SK-N-SH (cell line): ENCODE measurements at regions of chrX and their contacts with region 1.

Region 1: GRCh38 chrX:69615779-69616456 is at the start of gene EDA:
- DNase-seq: peak; percentile 88
- H3K4me3 ChIP-seq: peak within 1 kb of the TSS; percentile 38 to 49
- H3K27ac ChIP-seq: no peak within 1 kb of the TSS
- H3K4me1 ChIP-seq: no peaks in the 10 kb centered on the region; a peak in 1 of 4 replicates
- H3K27me3 ChIP-seq: peaks cover 40% of the 10 kb centered on the region
- CTCF ChIP-seq: no peak
- EP300 ChIP-seq: no peak
- RAD21 ChIP-seq: no peak
- polyA plus RNA-seq, gene EDA: 0.02 and 0.06 TPM in 2 replicates

Region 2: DNA sequence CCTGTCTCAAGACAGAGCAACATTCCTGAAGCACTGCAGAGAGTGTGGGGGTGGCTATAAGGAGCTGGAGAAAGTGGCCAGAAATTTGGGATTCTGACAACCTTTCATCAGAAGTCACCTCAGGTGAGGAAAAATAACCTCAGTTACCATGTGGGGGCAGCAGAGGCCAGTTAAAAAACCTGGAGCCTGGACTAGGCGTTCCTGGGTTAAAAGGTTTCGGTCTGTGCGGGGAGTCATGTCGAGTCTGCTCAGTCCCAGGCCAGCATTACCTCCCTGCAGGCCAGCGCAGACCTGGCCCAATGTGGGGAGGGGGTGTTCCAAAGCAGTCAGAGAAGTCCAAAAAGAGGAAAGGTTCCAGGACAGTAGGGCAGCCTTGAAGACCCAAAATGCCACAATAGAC is 122.7 kb before region 1 on chrX:
- CTCF ChIA-PET with region 1: interaction called, 45 read pairs
- POLR2A ChIA-PET with region 1: no interaction called
- DNase-seq: peak; percentile 45
- H3K4me3 ChIP-seq: peak overlapping the region in 1 of 2 experiments; percentile 31; a peak in 1 of 4 replicates
- H3K27ac ChIP-seq: no peak overlapping the region
- H3K4me1 ChIP-seq: no peaks in the 10 kb centered on the region
- H3K27me3 ChIP-seq: no peaks in the 10 kb centered on the region; the same call in 1 of the 2 replicates
- CTCF ChIP-seq: peak; percentile 62
- EP300 ChIP-seq: no peak
- RAD21 ChIP-seq: peak; percentile 75